ENCODE measurements at regions of chr11 and their contacts with region 1.

Region 1: GRCh38 chr11:6603287-6604080 is at the starts of genes ILK and RRP8:
- DNase-seq: peak; percentile 84
- H3K4me3 Mint-ChIP-seq: no peak within 1 kb of the TSS
- H3K27ac Mint-ChIP-seq: no peak within 1 kb of the TSS
- H3K4me1 Mint-ChIP-seq: peaks cover 26% of the 10 kb centered on the region
- H3K27me3 Mint-ChIP-seq: no peaks in the 10 kb centered on the region
- total RNA-seq, gene ILK: 90.1 and 97.5 TPM in 2 replicates
- total RNA-seq, gene RRP8: 38.8 and 40.5 TPM in 2 replicates

Region 2: GRCh38 chr11:6156628-6157359 is 446.7 kb before region 1 on chr11:
- intact Hi-C with region 1: no loop called
- DNase-seq: no peak
- H3K4me3 Mint-ChIP-seq: no peak overlapping the region
- H3K27ac Mint-ChIP-seq: no peak overlapping the region
- H3K4me1 Mint-ChIP-seq: no peaks in the 10 kb centered on the region
- H3K27me3 Mint-ChIP-seq: peaks cover 4% of the 10 kb centered on the region

Region 3: DNA sequence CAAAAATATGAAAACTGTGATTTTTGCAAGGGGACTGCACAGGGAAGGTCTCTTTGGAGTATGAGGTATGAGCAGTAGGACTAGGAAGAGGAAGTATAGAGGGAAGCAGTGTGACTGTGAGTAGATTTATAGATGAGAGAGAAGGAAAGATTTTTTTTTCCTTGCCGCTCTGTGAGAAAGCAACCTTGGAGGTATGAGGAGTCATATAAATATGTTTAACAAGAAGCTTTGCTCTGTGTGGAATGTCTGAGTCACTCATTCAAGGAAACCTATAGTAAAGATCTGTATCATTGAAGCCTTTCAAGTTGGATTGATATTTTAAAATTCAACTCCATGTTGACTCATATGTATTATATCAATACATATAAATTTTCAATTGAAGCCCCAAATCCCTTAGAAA is 80.2 kb before region 1 on chr11:
- intact Hi-C with region 1: loop called (anchors 1 kb)
- DNase-seq: no peak
- H3K4me3 Mint-ChIP-seq: no peak overlapping the region
- H3K27ac Mint-ChIP-seq: peak overlapping the region; percentile 4
- H3K4me1 Mint-ChIP-seq: peaks cover 39% of the 10 kb centered on the region
- H3K27me3 Mint-ChIP-seq: peaks cover 2% of the 10 kb centered on the region

Region 4: GRCh38 chr11:6556139-6556949 is 47.1 kb before region 1 on chr11:
- intact Hi-C with region 1: no loop called
- DNase-seq: no peak
- H3K4me3 Mint-ChIP-seq: no peak overlapping the region
- H3K27ac Mint-ChIP-seq: no peak overlapping the region
- H3K4me1 Mint-ChIP-seq: no peaks in the 10 kb centered on the region
- H3K27me3 Mint-ChIP-seq: no peaks in the 10 kb centered on the region

Region 5: DNA sequence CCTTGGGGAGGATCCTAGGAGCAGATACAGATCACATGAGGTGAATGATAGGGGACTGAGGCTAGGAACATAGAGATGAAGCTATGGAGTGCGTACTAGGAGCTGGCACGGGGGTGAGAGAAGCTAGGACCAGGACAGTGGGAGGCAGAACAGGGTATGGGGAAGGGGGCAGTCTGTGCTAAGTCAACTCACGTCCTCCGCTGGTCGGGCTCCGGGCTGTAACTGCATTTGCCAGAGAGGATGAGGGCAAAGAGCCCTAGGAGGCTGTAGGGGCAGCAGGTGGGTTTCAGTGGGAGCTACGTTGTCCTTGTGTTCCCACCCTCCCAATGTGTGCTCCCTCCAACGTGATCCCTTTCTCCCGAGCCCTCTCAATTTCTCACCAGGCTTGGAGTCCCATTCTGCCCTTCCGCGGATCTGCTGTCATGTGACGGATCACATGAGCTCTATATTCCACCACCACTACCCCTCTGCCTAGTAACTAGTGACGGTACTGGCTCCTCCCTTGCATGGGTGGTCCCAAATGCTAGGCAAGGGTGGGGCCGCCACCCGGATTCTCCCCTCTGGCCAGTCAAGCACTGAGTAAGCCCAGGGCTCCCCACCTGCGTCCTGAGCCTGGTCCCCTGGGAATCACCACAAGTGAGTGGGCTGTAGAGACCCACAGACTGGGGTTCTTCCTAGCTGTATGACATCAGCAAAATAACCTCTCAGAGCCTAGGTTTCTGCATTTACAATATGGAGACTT is 15.7 kb after region 1 on chr11 and contains the start of gene TPP1:
- intact Hi-C with region 1: loop called (anchors 1 kb)
- DNase-seq: peak; percentile 89
- H3K4me3 Mint-ChIP-seq: no peak within 1 kb of the TSS
- H3K27ac Mint-ChIP-seq: no peak within 1 kb of the TSS
- H3K4me1 Mint-ChIP-seq: no peaks in the 10 kb centered on the region
- H3K27me3 Mint-ChIP-seq: no peaks in the 10 kb centered on the region
- total RNA-seq, gene TPP1: 38.4 and 40.3 TPM in 2 replicates

Region 6: GRCh38 chr11:6667733-6668374 is 64.4 kb after region 1 on chr11:
- intact Hi-C with region 1: loop called (anchors 1 kb)
- DNase-seq: peak; percentile 55
- H3K4me3 Mint-ChIP-seq: peak overlapping the region; percentile 23
- H3K27ac Mint-ChIP-seq: peak overlapping the region; percentile 41
- H3K4me1 Mint-ChIP-seq: peaks cover 62% of the 10 kb centered on the region
- H3K27me3 Mint-ChIP-seq: peaks cover 12% of the 10 kb centered on the region

Region 7: GRCh38 chr11:7986768-7987559 is 1383.5 kb after region 1 on chr11 and contains the start of gene EIF3F:
- intact Hi-C with region 1: loop called (anchors 10 kb)
- DNase-seq: peak; percentile 91
- H3K4me3 Mint-ChIP-seq: peak within 1 kb of the TSS; percentile 99
- H3K27ac Mint-ChIP-seq: peak within 1 kb of the TSS; percentile 93
- H3K4me1 Mint-ChIP-seq: peaks cover 39% of the 10 kb centered on the region
- H3K27me3 Mint-ChIP-seq: peaks cover 2% of the 10 kb centered on the region
- total RNA-seq, gene EIF3F: 210 and 214 TPM in 2 replicates

Measured in activated T-helper 1 cell treated with anti-CD3 and anti-CD28 coated beads, Interleukin-12 subunit alpha, Interleukin-12 subunit beta, Interleukin-2, Interleukin-4 antibody, amounts not matched to agents 30 ng/mL and 10 ng/mL and 1 ng/mL, durations not matched to agents 14 hours and 24 hours and 36 hours (primary cell).